ENCODE measurements at regions of chr1 and their contacts with region 1.

Region 1: GRCh38 chr1:9101510-9102146 is 27.3 kb downstream of the GPR157 start:
- DNase-seq: peak; percentile 29 to 66 (median 50)
- ATAC-seq: peak; percentile 94
- H3K4me3 ChIP-seq: no peak overlapping the region
- H3K27ac ChIP-seq: no peak overlapping the region
- H3K4me1 ChIP-seq: no peaks in the 10 kb centered on the region; a peak in 1 of 5 replicates
- H3K27me3 ChIP-seq: peaks cover 41 to 72% of the 10 kb centered on the region in 2 experiments
- CTCF ChIP-seq: peak; percentile 78 to 88 (median 81)
- EP300 ChIP-seq: no peak
- POLR2A ChIP-seq: no peak
- RAD21 ChIP-seq: peak; percentile 71 to 80

Region 2: DNA sequence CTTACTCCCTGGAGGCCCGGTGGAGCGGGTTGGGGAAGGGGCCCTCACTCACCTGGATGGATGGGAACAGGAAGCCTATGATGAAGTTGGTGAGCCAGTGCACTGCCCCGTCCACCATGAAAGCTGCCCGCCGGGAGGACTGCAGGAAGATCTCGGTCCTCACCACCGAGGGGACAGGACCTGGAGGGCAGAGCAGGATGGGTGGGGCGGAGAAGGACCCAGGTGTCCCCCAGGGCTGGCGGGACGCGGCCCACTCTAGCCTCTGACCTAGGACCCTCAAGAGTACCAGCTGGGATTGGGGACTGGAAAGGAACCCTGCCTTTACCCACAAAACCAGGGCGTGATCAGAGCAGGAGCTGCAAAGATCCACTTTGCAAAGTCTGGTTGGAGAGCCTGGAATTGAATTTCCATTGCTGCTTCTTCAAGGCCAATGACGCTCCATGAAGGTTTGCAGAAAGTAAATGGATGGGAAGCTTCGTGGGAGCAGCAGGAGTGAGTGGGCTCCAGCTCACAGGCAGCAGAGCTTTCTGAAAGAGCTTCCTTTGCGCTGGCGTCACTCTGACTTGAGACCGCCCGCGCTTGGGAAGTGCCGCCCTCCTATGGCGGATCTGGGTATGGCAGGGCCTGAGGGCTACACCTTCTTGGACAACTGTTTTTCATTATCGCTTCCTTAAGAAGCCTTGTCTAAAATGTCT is 96.8 kb before region 1 on chr1:
- CTCF ChIA-PET with region 1: interaction called, 14 read pairs
- POLR2A ChIA-PET with region 1: no interaction called
- in situ Hi-C with region 1: no loop called
- intact Hi-C with region 1: loop called (anchors 2 kb)
- DNase-seq: peak; percentile 86 to 91 (median 90)
- ATAC-seq: peak; percentile 96
- H3K4me3 ChIP-seq: no peak overlapping the region
- H3K27ac ChIP-seq: no peak overlapping the region
- H3K4me1 ChIP-seq: peaks cover 0 to 6% of the 10 kb centered on the region in 2 experiments; a peak in 2 of 5 replicates
- H3K27me3 ChIP-seq: peaks cover 46 to 79% of the 10 kb centered on the region in 2 experiments
- CTCF ChIP-seq: peak; percentile 93 to 98 (median 98)
- EP300 ChIP-seq: no peak
- POLR2A ChIP-seq: no peak
- RAD21 ChIP-seq: peak; percentile 59 to 83

Region 3: GRCh38 chr1:9018333-9018732 is 83.3 kb before region 1 on chr1:
- CTCF ChIA-PET with region 1: no interaction called
- POLR2A ChIA-PET with region 1: no interaction called
- in situ Hi-C with region 1: loop called (anchors 5 kb)
- intact Hi-C with region 1: no loop called
- DNase-seq: no peak
- ATAC-seq: no peak
- H3K4me3 ChIP-seq: no peak overlapping the region
- H3K27ac ChIP-seq: no peak overlapping the region
- H3K4me1 ChIP-seq: peaks cover 0 to 7% of the 10 kb centered on the region in 2 experiments; a peak in 1 of 5 replicates
- H3K27me3 ChIP-seq: peaks cover 61 to 85% of the 10 kb centered on the region in 2 experiments
- CTCF ChIP-seq: no peak
- EP300 ChIP-seq: no peak
- POLR2A ChIP-seq: no peak
- RAD21 ChIP-seq: no peak

Measured in K562 (cell line).